ENCODE measurements at regions of chr1 and their contacts with region 1.

Region 1: GRCh38 chr1:244272471-244273261 is 179.0 kb downstream of the ADSS2 start:
- DNase-seq: peak; percentile 85
- H3K4me3 ChIP-seq: no peak overlapping the region
- H3K27ac ChIP-seq: no peak overlapping the region
- H3K4me1 ChIP-seq: peaks cover 14% of the 10 kb centered on the region
- H3K27me3 ChIP-seq: no peaks in the 10 kb centered on the region
- CTCF ChIP-seq: peak; percentile 99

Region 2: GRCh38 chr1:243343970-243344937 is 928.4 kb before region 1 on chr1:
- CTCF ChIA-PET with region 1: no interaction called
- POLR2A ChIA-PET with region 1: no interaction called
- intact Hi-C with region 1: loop called (anchors 5 kb)
- DNase-seq: peak; percentile 42
- H3K4me3 ChIP-seq: no peak overlapping the region
- H3K27ac ChIP-seq: no peak overlapping the region
- H3K4me1 ChIP-seq: no peaks in the 10 kb centered on the region
- H3K27me3 ChIP-seq: no peaks in the 10 kb centered on the region
- CTCF ChIP-seq: peak; percentile 59

Region 3: DNA sequence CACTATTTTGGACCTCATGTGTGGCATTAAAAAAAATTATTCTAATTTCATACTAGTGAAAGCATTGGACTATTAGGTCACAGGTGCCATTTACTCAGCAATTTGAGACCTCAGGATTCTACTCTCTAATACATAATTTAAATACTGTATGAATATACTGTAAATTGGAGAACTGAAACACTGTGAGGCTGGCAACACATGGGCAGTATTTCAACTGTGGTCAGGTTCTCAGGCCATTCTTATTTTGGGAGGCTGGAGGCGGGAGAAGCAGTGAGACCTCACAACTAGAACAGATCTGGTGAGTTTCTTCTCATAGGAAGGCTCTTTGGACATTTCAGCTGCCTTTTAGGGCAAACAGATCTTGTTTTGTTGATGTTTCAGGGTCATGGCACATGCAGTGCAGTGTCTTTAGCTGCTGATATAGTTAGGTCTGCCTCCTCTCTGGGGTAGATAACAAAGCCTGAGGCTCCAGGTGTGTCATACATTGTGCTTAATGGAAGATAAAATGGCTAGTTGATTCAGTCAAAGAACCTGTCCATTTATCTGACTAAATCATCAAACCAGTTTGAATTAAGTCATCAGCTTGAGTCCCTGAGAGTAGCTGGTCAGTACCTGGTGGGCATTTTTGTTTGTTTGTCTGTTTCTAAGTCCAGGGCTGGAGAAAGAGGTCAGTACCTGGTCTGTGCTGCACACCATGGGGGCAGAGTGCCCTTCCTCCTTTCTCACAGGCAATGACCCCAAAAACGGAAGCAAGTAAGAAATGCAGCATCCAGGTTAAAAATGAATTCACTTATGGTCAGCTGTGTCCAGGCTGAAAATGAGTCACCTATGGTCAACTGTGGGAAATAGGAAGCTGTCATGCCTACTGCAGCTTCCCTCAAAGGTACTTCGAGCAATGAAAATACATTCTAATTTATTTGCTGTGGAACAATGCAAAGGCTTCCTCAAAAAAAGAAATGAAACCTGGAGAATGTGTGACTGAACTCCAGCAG is 800.6 kb before region 1 on chr1:
- CTCF ChIA-PET with region 1: no interaction called
- POLR2A ChIA-PET with region 1: no interaction called
- intact Hi-C with region 1: loop called (anchors 5 kb)
- DNase-seq: no peak
- H3K4me3 ChIP-seq: no peak overlapping the region
- H3K27ac ChIP-seq: no peak overlapping the region
- H3K4me1 ChIP-seq: peaks cover 11% of the 10 kb centered on the region
- H3K27me3 ChIP-seq: no peaks in the 10 kb centered on the region
- CTCF ChIP-seq: no peak

Region 4: DNA sequence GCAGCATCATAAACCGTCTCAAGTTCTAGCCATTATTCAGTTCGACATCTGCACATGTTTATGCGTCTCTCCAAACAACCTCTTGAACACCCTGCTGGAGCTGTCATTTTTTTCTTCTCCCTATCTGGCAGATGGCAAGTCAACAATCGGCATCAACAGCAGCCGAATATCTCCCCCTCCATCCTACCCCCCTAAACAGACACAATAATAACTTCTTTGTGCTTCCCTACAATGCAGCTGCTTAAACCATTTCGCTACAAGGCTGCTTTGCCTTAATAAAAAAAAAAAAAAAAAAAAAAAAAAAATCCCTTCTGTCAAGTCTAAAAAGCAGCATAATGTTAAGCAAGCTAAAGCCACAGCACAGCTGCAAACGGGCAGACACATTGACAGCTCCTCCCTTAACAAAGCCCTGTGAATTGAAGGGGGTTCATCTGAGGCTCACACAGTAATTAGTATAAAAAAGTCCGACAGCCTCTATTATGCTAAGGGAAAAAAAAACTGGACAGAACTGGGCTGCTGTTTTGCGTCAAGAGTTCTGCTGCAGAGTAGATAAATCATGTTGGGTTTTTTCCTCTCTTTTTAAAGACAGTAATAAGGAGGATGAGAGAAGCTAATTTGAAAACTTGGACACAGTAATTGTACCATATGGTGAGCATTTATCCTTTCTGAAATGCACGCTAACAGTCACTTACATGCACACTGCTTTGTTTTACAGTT is 559.0 kb before region 1 on chr1:
- CTCF ChIA-PET with region 1: no interaction called
- POLR2A ChIA-PET with region 1: no interaction called
- intact Hi-C with region 1: loop called (anchors 5 kb)
- DNase-seq: peak; percentile 22
- H3K4me3 ChIP-seq: no peak overlapping the region
- H3K27ac ChIP-seq: no peak overlapping the region
- H3K4me1 ChIP-seq: peaks cover 16% of the 10 kb centered on the region
- H3K27me3 ChIP-seq: no peaks in the 10 kb centered on the region
- CTCF ChIP-seq: no peak

Region 5: GRCh38 chr1:244047621-244048471 is 224.8 kb before region 1 on chr1:
- CTCF ChIA-PET with region 1: no interaction called
- POLR2A ChIA-PET with region 1: no interaction called
- intact Hi-C with region 1: loop called (anchors 2 kb)
- DNase-seq: peak; percentile 100
- H3K4me3 ChIP-seq: peak overlapping the region; percentile 95
- H3K27ac ChIP-seq: peak overlapping the region; percentile 82
- H3K4me1 ChIP-seq: peaks cover 32% of the 10 kb centered on the region
- H3K27me3 ChIP-seq: no peaks in the 10 kb centered on the region
- CTCF ChIP-seq: no peak

Region 6: GRCh38 chr1:244256086-244256676 is 16.5 kb before region 1 on chr1:
- CTCF ChIA-PET with region 1: no interaction called
- POLR2A ChIA-PET with region 1: no interaction called
- intact Hi-C with region 1: no loop called
- DNase-seq: no peak
- H3K4me3 ChIP-seq: no peak overlapping the region
- H3K27ac ChIP-seq: no peak overlapping the region
- H3K4me1 ChIP-seq: no peaks in the 10 kb centered on the region
- H3K27me3 ChIP-seq: no peaks in the 10 kb centered on the region
- CTCF ChIP-seq: no peak